ENCODE measurements at regions of chr6 and their contacts with region 1.

Region 1: GRCh38 chr6:32195652-32195901 is 3.1 kb upstream of the GPSM3 start:
- DNase-seq: peak; percentile 100
- H3K4me3 Mint-ChIP-seq: peak overlapping the region; percentile 97
- H3K27ac Mint-ChIP-seq: peak overlapping the region; percentile 98
- H3K4me1 Mint-ChIP-seq: peaks cover 48% of the 10 kb centered on the region
- H3K27me3 Mint-ChIP-seq: peaks cover 2% of the 10 kb centered on the region

Region 2: DNA sequence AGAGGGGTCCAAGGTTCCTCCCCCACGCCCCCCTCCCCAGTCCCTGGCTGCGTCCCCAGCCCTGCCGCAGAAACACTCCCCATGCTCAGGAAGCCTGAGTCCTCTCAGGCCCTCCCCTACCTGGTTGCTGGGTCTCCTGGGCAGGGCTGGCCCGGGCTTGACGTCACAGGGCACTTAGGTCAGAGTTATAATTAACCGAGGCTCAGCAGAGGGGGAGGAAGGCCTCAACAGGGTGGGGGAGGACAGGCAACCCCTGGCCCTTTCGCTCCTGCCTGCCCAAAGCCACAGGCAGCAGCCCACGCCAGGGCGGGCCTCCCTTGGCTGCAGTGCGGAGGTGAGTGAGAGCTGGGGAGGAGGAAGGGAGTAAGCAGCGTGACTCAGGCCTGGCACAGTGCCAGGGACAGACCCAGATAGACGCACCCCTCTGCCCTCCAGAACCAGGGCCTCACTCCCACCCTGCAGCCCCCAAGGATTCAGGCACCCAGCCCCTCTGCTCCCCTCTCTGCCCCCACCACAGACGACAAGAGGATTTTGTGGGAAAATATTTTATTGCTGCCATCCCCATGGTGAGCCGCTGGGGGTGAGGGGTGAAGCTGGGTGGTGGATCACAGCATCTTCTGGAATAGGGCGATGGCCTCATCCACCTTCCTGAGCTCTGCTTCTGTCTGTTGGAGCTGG is 418.4 kb before region 1 on chr6 and contains the start of gene VWA7:
- intact Hi-C with region 1: no loop called
- DNase-seq: peak; percentile 68
- H3K4me3 Mint-ChIP-seq: no peak within 1 kb of the TSS
- H3K27ac Mint-ChIP-seq: peak within 1 kb of the TSS; percentile 87
- H3K4me1 Mint-ChIP-seq: peaks cover 25% of the 10 kb centered on the region
- H3K27me3 Mint-ChIP-seq: no peaks in the 10 kb centered on the region
- total RNA-seq, gene VWA7: 2.9 and 5.0 TPM in 2 replicates

Region 3: GRCh38 chr6:32087574-32088486 is 107.7 kb before region 1 on chr6:
- intact Hi-C with region 1: loop called (anchors 1 kb)
- DNase-seq: peak; percentile 55
- H3K4me3 Mint-ChIP-seq: no peak overlapping the region
- H3K27ac Mint-ChIP-seq: no peak overlapping the region
- H3K4me1 Mint-ChIP-seq: peaks cover 11% of the 10 kb centered on the region
- H3K27me3 Mint-ChIP-seq: peaks cover 42% of the 10 kb centered on the region

Region 4: GRCh38 chr6:33317669-33318425 is 1122.3 kb after region 1 on chr6 and contains the start of gene ZBTB22:
- intact Hi-C with region 1: no loop called
- DNase-seq: peak; percentile 92
- H3K4me3 Mint-ChIP-seq: peak within 1 kb of the TSS; percentile 97
- H3K27ac Mint-ChIP-seq: peak within 1 kb of the TSS; percentile 94
- H3K4me1 Mint-ChIP-seq: peaks cover 74% of the 10 kb centered on the region
- H3K27me3 Mint-ChIP-seq: no peaks in the 10 kb centered on the region
- total RNA-seq, gene ZBTB22: 12.5 and 14.7 TPM in 2 replicates

Measured in activated T-helper 1 cell treated with anti-CD3 and anti-CD28 coated beads, Interleukin-12 subunit alpha, Interleukin-12 subunit beta, Interleukin-2, Interleukin-4 antibody, amounts not matched to agents 30 ng/mL and 10 ng/mL and 1 ng/mL, durations not matched to agents 14 hours and 24 hours and 36 hours (primary cell).